Lower lobe of right lung (tissue), 2 donors: ENCODE measurements at regions of chr18 and their contacts with region 1.

Region 1: DNA sequence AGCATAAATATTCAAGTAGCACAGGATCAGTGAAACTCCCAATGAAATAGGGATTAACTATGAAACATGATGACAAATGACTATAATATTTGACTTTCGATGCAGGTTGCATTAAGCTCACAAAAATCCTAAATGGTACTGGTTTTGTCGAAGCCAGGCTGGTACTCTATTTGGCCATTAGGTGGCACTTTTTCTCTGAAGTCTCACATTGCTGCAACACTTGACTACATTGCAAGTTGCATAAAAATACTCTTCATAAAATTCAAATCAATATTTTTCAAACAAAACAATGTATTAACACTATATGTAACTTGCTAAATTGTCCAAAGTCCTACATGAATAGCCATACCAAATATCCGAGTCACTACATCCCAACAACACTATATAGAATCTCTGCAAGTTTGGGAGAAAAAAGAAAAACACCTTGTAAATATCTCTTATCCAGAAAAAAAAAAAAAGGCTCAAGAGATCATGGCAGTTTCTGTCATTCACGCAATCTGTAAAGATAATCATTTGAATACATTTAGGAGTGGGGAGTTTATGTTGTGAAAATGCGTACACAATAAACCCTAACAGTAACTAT is 9.5 kb downstream of the RTTN start:
- DNase-seq: no peak
- ATAC-seq: peak; percentile 45 to 68
- H3K4me3 ChIP-seq: no peak overlapping the region
- H3K27ac ChIP-seq: no peak overlapping the region
- H3K4me1 ChIP-seq: no peaks in the 10 kb centered on the region
- H3K27me3 ChIP-seq: no peaks in the 10 kb centered on the region
- CTCF ChIP-seq: peak; percentile 79

Region 2: GRCh38 chr18:70431203-70431624 is 235.3 kb after region 1 on chr18:
- intact Hi-C with region 1: loop called (anchors 10 kb)
- DNase-seq: no peak
- ATAC-seq: no peak
- H3K4me3 ChIP-seq: no peak overlapping the region
- H3K27ac ChIP-seq: no peak overlapping the region
- H3K4me1 ChIP-seq: no peaks in the 10 kb centered on the region
- H3K27me3 ChIP-seq: no peaks in the 10 kb centered on the region
- CTCF ChIP-seq: no peak